Posterior vena cava (tissue), 2 donors: ENCODE measurements at regions of chr4 and their contacts with region 1.

Region 1: GRCh38 chr4:183783991-183784553 is 121.0 kb upstream of the STOX2 start:
- DNase-seq: no peak

Region 2: GRCh38 chr4:183924362-183925044 is 140.4 kb after region 1 on chr4:
- intact Hi-C with region 1: no loop called
- DNase-seq: no peak

Region 3: DNA sequence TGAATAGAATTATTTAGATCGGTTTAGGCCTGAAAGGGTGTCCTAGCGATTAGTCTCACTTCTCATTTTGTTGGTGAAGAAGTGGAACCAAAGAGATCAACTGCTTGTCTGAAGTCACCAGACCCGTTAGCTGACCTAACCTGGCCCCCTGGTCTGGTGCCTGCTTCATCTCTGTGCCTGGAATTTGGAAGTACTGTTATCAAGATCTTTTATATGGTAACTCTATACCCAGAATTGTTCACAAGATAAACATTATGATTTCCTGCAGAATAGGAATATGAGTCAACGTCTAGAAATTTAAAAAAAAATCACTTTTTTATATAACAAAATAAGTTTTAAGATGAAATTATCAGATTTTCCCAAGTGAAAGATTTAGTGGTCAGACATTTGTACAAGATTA is 1574.4 kb after region 1 on chr4:
- intact Hi-C with region 1: loop called in 1 of 2 experiments (anchors 5 kb)
- DNase-seq: no peak